ENCODE measurements at regions of chr2 and their contacts with region 1.

Region 1: DNA sequence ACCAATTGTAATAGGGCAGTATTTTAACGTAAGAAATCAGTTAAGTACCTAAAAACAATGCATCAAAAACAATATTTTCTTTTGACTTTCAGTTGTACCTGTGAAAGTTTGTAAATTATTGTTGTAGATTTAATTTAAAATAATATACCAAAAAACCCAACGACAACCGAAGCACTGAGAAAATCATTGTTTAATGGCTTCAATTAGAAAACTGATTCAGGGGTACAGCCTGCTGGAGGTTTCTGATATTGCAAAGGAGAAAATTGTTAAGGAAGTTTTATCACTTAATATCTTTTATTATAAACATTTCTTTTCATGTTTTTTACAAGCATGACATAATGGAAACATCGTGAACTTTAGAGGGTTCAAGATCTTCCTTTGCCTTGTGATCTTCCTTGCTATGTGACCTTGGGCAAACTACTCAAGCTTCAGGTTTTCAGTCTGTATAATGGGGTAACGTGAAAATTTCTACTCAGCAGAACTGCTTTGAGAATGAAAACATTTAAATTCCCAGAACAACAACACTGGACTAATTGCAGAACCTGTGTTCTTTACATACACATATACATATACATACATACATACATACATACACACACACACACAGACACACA is 76.3 kb upstream of the GLS start:
- DNase-seq: peak in 5 of 9 donors; percentile 6 to 19 (median 13)
- ATAC-seq: no peak
- H3K4me3 ChIP-seq: no peak overlapping the region
- H3K4me3 Mint-ChIP-seq: no peak overlapping the region
- H3K27ac ChIP-seq: no peak overlapping the region
- H3K27ac Mint-ChIP-seq: no peak overlapping the region
- H3K4me1 ChIP-seq: no peaks in the 10 kb centered on the region
- H3K4me1 Mint-ChIP-seq: peaks cover 0 to 9% (median 0%) of the 10 kb centered on the region in 7 donors
- H3K27me3 ChIP-seq: no peaks in the 10 kb centered on the region
- H3K27me3 Mint-ChIP-seq: no peaks in the 10 kb centered on the region

Region 2: DNA sequence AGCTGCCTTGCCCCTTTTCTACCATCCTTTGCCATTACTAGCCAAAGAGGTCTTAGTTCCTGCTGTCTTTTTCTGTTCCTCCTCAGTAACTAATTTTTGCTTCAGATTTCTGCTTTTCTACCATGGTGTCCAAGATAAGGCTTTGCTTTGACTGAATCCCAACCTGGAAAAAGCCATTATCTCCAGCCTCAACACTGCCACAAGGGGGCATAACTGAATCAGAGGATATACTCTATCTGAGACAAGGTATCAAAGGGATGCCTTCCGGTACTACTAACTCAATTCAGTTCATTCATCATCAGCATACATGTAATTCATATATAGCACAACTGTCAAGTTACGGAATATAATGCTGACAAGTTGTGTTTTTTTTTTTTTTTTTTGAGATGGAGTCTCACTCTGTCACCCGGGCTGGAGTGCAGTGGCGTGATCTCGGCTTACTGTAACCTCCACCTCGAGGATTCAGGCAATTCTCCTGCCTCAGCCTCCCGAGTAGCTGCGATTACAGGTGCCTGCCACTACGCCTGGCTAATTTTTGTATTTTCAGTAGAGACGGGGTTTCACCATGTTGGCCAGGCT is 1053.1 kb before region 1 on chr2:
- CTCF ChIA-PET with region 1: no interaction called
- POLR2A ChIA-PET with region 1: no interaction called
- intact Hi-C with region 1: loop called in 1 of 2 experiments (anchors 2 kb)
- DNase-seq: peak in 7 of 9 donors; percentile 26 to 63 (median 49)
- ATAC-seq: peak; percentile 87
- H3K4me3 ChIP-seq: no peak overlapping the region
- H3K4me3 Mint-ChIP-seq: no peak overlapping the region
- H3K27ac ChIP-seq: no peak overlapping the region
- H3K27ac Mint-ChIP-seq: peak overlapping the region in 1 of 9 donors; percentile 1
- H3K4me1 ChIP-seq: no peaks in the 10 kb centered on the region
- H3K4me1 Mint-ChIP-seq: peaks cover 0 to 4% (median 0%) of the 10 kb centered on the region in 7 donors
- H3K27me3 ChIP-seq: no peaks in the 10 kb centered on the region
- H3K27me3 Mint-ChIP-seq: no peaks in the 10 kb centered on the region

Region 3: DNA sequence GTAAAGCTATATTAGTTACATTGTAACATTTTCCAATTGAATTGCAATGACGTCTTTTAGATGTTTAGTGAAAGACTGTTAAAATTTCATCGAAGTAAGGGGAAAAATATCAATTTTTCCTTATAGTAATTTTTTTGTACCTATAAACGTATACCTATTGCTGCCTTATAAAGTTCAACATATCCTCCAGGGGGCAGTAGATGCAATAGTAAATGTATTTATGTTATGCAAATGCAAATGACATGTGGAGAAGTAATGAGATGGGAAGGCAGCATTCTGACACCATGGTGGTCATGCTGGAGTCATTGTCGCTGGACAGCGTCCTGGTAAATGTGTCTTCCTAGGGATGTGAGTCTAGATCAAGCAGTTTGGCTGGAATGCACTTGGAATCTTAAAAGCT is 780.4 kb before region 1 on chr2:
- CTCF ChIA-PET with region 1: no interaction called
- POLR2A ChIA-PET with region 1: no interaction called
- intact Hi-C with region 1: loop called in 1 of 2 experiments (anchors 5 kb)
- DNase-seq: peak in 7 of 9 donors; percentile 2 to 32 (median 18)
- ATAC-seq: peak; percentile 54
- H3K4me3 ChIP-seq: no peak overlapping the region
- H3K4me3 Mint-ChIP-seq: no peak overlapping the region
- H3K27ac ChIP-seq: no peak overlapping the region
- H3K27ac Mint-ChIP-seq: no peak overlapping the region
- H3K4me1 ChIP-seq: no peaks in the 10 kb centered on the region
- H3K4me1 Mint-ChIP-seq: no peaks in the 10 kb centered on the region
- H3K27me3 ChIP-seq: no peaks in the 10 kb centered on the region
- H3K27me3 Mint-ChIP-seq: peaks cover 14 to 53% (median 32%) of the 10 kb centered on the region in 5 donors

Region 4: DNA sequence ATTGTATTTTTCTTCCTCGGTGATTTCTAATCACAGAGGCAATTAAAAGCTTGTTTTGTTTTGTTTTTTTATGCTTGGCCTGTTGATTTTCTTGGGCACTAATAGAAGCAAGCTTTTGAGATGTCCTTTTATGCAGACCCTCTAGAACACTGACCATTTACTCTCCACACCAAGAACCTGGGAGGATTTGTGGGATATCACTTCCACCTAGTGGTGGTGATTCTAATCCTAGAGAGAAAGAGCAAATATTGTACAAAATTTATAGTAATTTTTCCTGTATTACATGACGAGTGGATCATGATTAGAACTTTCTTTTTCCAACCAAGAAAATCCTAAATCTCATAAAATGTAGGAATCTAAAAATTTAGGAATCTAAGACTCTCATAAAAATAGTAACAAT is 293.2 kb before region 1 on chr2:
- CTCF ChIA-PET with region 1: no interaction called
- POLR2A ChIA-PET with region 1: no interaction called
- intact Hi-C with region 1: loop called in 1 of 2 experiments (anchors 10 kb)
- DNase-seq: no peak
- ATAC-seq: no peak
- H3K4me3 ChIP-seq: no peak overlapping the region
- H3K4me3 Mint-ChIP-seq: no peak overlapping the region
- H3K27ac ChIP-seq: no peak overlapping the region
- H3K27ac Mint-ChIP-seq: peak overlapping the region in 4 of 9 donors; percentile 1 to 64 (median 43)
- H3K4me1 ChIP-seq: peaks cover 8 to 10% of the 10 kb centered on the region in 2 donors
- H3K4me1 Mint-ChIP-seq: peaks cover 7 to 36% (median 26%) of the 10 kb centered on the region in 7 donors
- H3K27me3 ChIP-seq: no peaks in the 10 kb centered on the region
- H3K27me3 Mint-ChIP-seq: no peaks in the 10 kb centered on the region

Region 5: GRCh38 chr2:190636373-190636772 is 167.9 kb before region 1 on chr2:
- CTCF ChIA-PET with region 1: no interaction called
- POLR2A ChIA-PET with region 1: no interaction called
- intact Hi-C with region 1: loop called in 1 of 2 experiments (anchors 5 kb)
- DNase-seq: no peak
- ATAC-seq: no peak
- H3K4me3 ChIP-seq: no peak overlapping the region
- H3K4me3 Mint-ChIP-seq: no peak overlapping the region
- H3K27ac ChIP-seq: no peak overlapping the region
- H3K27ac Mint-ChIP-seq: no peak overlapping the region
- H3K4me1 ChIP-seq: no peaks in the 10 kb centered on the region
- H3K4me1 Mint-ChIP-seq: peaks cover 0 to 4% (median 0%) of the 10 kb centered on the region in 7 donors
- H3K27me3 ChIP-seq: no peaks in the 10 kb centered on the region
- H3K27me3 Mint-ChIP-seq: peaks cover 0 to 2% (median 0%) of the 10 kb centered on the region in 5 donors

Measured in naive thymus-derived CD4-positive, alpha-beta T cell (primary cell).